CD8-positive, alpha-beta T cell (primary cell): ENCODE measurements at regions of chr17 and their contacts with region 1.

Region 1: GRCh38 chr17:68291844-68292695 is 775 bp downstream of the ARSG start:
- DNase-seq: peak; percentile 88 to 99 (median 95)
- ATAC-seq: peak; percentile 70
- H3K4me3 ChIP-seq: peak overlapping the region; percentile 56 to 89
- H3K4me3 Mint-ChIP-seq: peak overlapping the region; percentile 82
- H3K27ac ChIP-seq: peak overlapping the region; percentile 66 to 97
- H3K27ac Mint-ChIP-seq: peak overlapping the region; percentile 91
- H3K4me1 ChIP-seq: peaks cover 60% of the 10 kb centered on the region
- H3K4me1 Mint-ChIP-seq: peaks cover 60% of the 10 kb centered on the region
- H3K27me3 ChIP-seq: no peaks in the 10 kb centered on the region
- H3K27me3 Mint-ChIP-seq: no peaks in the 10 kb centered on the region
- CTCF ChIP-seq: no peak

Region 2: DNA sequence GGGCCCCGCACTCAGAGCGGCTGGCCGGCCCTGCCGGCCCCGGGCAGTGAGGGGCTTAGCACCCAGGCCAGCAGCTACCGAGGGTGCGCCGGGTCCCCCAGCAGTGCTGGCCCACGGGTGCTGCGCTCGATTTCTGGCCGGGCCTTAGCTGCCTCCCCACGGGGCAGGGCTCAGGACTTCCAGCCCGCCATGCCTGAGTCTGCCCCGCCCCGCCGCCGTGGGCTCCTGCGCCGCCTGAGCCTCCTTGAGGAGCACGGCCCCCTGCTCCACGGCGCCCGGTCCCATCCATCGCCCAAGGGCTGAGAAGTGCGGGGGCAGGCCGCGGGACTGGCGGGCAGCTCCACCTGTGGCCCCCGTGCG is 112.2 kb before region 1 on chr17:
- CTCF ChIA-PET with region 1: interaction called, 3 read pairs
- POLR2A ChIA-PET with region 1: interaction called, 8 read pairs
- intact Hi-C with region 1: loop called in 1 of 2 experiments (anchors 2 kb)
- DNase-seq: peak in 1 of 9 experiments; percentile 18
- ATAC-seq: no peak
- H3K4me3 ChIP-seq: no peak overlapping the region
- H3K4me3 Mint-ChIP-seq: no peak overlapping the region
- H3K27ac ChIP-seq: no peak overlapping the region
- H3K27ac Mint-ChIP-seq: no peak overlapping the region
- H3K4me1 ChIP-seq: peaks cover 50% of the 10 kb centered on the region
- H3K4me1 Mint-ChIP-seq: peaks cover 63% of the 10 kb centered on the region
- H3K27me3 ChIP-seq: no peaks in the 10 kb centered on the region
- H3K27me3 Mint-ChIP-seq: no peaks in the 10 kb centered on the region
- CTCF ChIP-seq: no peak

Region 3: DNA sequence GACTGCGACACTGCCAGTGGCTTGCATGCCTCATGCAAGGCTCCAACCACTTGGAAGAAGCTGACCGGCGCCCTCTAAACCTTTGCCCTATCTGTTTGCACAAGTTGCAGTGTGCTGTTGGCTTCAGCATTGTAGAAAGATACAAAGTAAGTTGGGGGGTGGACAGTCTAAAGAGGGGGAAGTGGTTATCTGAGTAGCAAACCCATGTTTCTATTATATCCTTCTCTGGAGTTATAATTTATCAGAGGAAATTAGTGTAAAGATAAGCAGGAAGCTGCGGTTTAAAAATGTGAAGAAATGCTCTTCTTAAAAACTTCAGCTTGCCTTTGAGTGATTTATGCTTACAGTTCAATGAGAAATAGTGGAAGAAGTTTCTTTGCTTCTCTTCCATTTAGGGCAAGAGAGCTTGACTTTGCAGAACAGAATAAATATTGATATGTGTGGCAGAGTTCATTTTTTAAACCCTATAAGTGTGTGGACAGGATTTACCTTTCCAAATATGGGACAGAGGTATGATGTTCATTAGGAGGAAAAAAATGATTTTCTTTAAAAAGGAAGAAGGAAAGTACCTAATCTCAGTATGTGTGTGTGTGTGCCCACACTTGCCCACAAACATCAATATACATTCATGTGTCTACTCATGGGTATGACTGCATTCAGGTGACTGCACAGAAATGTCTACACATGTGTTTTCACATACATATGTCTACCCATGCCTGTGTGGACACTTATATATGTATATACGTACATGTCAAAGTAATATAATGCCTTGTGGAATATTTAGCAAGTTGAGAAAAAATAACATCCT is 36.1 kb before region 1 on chr17:
- CTCF ChIA-PET with region 1: interaction called, 3 read pairs
- POLR2A ChIA-PET with region 1: interaction called, 16 read pairs
- intact Hi-C with region 1: no loop called
- DNase-seq: peak in 3 of 9 experiments; percentile 33 to 74 (median 58)
- ATAC-seq: peak; percentile 22
- H3K4me3 ChIP-seq: no peak overlapping the region
- H3K4me3 Mint-ChIP-seq: peak overlapping the region; percentile 24
- H3K27ac ChIP-seq: peak overlapping the region; percentile 34 to 97
- H3K27ac Mint-ChIP-seq: peak overlapping the region; percentile 97
- H3K4me1 ChIP-seq: peaks cover 76% of the 10 kb centered on the region
- H3K4me1 Mint-ChIP-seq: peaks cover 82% of the 10 kb centered on the region
- H3K27me3 ChIP-seq: no peaks in the 10 kb centered on the region
- H3K27me3 Mint-ChIP-seq: no peaks in the 10 kb centered on the region
- CTCF ChIP-seq: no peak

Region 4: DNA sequence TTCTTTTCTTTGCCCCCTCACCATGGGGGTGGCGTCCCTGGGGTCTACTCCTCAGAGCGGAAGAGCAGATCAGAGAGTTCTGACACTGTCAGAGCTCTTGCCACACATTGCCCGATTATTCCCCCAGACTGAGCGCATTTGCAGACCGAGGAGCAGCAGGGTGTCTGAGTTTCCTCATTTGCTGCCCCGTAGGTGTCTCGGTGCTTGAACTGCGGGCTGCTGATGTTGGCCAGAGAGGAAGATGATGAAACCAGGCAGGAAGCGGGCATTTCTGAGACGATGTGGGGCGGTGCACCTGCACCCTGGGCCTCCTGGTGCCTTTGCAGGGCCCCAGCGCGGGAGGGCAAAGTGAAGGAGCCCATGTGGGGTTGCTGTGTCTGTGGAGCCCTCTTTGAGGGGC is 54.4 kb after region 1 on chr17:
- CTCF ChIA-PET with region 1: interaction called, 6 read pairs
- POLR2A ChIA-PET with region 1: interaction called, 6 read pairs
- intact Hi-C with region 1: loop called (anchors 2 to 5 kb)
- DNase-seq: peak; percentile 22 to 85 (median 67)
- ATAC-seq: peak; percentile 75
- H3K4me3 ChIP-seq: peak overlapping the region; percentile 26 to 30
- H3K4me3 Mint-ChIP-seq: peak overlapping the region; percentile 69
- H3K27ac ChIP-seq: peak overlapping the region; percentile 41 to 62
- H3K27ac Mint-ChIP-seq: peak overlapping the region; percentile 92
- H3K4me1 ChIP-seq: peaks cover 64% of the 10 kb centered on the region
- H3K4me1 Mint-ChIP-seq: peaks cover 72% of the 10 kb centered on the region
- H3K27me3 ChIP-seq: no peaks in the 10 kb centered on the region
- H3K27me3 Mint-ChIP-seq: no peaks in the 10 kb centered on the region
- CTCF ChIP-seq: no peak

Region 5: GRCh38 chr17:68435876-68436842 is 144.1 kb after region 1 on chr17:
- CTCF ChIA-PET with region 1: interaction called, 10 read pairs
- POLR2A ChIA-PET with region 1: interaction called, 9 read pairs
- intact Hi-C with region 1: loop called in 1 of 2 experiments (anchors 1 kb)
- DNase-seq: peak; percentile 71 to 91 (median 87)
- ATAC-seq: peak; percentile 83
- H3K4me3 ChIP-seq: no peak overlapping the region
- H3K4me3 Mint-ChIP-seq: peak overlapping the region; percentile 51
- H3K27ac ChIP-seq: no peak overlapping the region
- H3K27ac Mint-ChIP-seq: peak overlapping the region; percentile 81
- H3K4me1 ChIP-seq: peaks cover 30% of the 10 kb centered on the region
- H3K4me1 Mint-ChIP-seq: peaks cover 50% of the 10 kb centered on the region
- H3K27me3 ChIP-seq: no peaks in the 10 kb centered on the region
- H3K27me3 Mint-ChIP-seq: no peaks in the 10 kb centered on the region
- CTCF ChIP-seq: peak; percentile 96

Region 6: DNA sequence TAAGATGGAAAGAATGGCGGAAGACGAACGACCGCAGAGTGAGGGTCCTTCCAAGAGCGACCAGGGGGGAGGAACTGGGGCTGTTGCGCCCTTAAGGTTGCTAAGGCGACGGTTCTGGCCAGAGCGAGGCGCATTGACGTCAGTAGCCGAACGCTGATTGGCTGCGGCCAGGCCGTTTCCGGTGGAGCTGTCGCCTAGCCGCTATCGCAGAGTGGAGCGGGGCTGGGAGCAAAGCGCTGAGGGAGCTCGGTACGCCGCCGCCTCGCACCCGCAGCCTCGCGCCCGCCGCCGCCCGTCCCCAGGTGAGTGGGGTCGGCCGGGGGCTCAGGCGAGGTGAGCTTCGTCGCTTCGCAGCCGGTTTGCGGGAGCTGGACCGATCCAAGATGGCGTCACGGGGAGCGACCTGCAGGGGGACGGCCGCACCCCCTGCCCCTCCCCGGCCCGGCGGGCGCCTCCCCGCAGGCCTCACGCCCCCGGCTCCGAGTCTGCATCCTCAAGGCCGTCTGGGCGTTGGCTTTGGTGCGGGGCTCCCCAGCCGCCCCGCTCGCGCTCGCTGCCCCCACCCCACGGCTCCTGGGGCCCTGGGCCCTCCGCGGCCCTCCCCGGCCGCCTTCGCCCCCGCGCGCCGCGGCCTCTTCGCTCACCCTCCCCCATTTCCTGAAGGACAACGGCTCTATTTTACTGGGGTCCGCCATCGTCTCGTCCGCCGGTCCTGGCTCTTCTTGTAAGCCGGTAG is 220.3 kb after region 1 on chr17 and contains the start of gene PRKAR1A:
- CTCF ChIA-PET with region 1: no interaction called
- POLR2A ChIA-PET with region 1: interaction called, 5 read pairs
- intact Hi-C with region 1: loop called (anchors 2 kb)
- DNase-seq: peak; percentile 88 to 98 (median 94)
- ATAC-seq: peak; percentile 79
- H3K4me3 ChIP-seq: peak within 1 kb of the TSS; percentile 85 to 87
- H3K4me3 Mint-ChIP-seq: peak within 1 kb of the TSS; percentile 100
- H3K27ac ChIP-seq: peak within 1 kb of the TSS; percentile 99
- H3K27ac Mint-ChIP-seq: peak within 1 kb of the TSS; percentile 100
- H3K4me1 ChIP-seq: peaks cover 22% of the 10 kb centered on the region
- H3K4me1 Mint-ChIP-seq: peaks cover 54% of the 10 kb centered on the region
- H3K27me3 ChIP-seq: no peaks in the 10 kb centered on the region
- H3K27me3 Mint-ChIP-seq: no peaks in the 10 kb centered on the region
- CTCF ChIP-seq: no peak
- total RNA-seq, gene PRKAR1A: 61.2 to 63.5 TPM